Head of caudate nucleus (tissue), 42 donors: ENCODE measurements at regions of chr11 and their contacts with region 1.

Region 1: GRCh38 chr11:95764267-95764898 is 25.2 kb downstream of the FAM76B start:
- DNase-seq: peak in 2 of 42 donors; percentile 5 to 11

Region 2: GRCh38 chr11:94973099-94973968 is 791.0 kb before region 1 on chr11 and contains the starts of genes CWC15 and KDM4D:
- intact Hi-C with region 1: loop called (anchors 10 kb)
- DNase-seq: peak; percentile 91 to 99 (median 96)

Region 3: DNA sequence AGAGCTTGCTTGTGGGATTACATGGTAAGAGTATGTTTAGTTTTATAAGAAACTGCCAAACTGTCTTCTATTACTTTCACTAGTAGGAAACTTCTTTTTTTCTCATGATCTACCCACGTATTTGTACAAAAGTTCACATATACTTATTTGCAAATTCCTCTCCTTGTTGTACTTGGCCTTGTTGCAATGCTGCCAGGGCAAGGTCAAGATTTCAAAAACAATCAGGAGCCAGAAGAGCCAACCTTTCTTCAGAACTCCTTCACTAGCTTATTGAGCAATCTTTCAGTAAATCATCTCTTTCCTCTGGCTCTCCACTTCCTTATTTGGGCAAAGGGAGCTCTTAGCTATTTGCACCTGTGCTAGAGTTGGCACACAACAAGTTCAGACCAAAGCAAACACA is 688.0 kb before region 1 on chr11:
- intact Hi-C with region 1: loop called (anchors 10 kb)
- DNase-seq: no peak

Region 4: DNA sequence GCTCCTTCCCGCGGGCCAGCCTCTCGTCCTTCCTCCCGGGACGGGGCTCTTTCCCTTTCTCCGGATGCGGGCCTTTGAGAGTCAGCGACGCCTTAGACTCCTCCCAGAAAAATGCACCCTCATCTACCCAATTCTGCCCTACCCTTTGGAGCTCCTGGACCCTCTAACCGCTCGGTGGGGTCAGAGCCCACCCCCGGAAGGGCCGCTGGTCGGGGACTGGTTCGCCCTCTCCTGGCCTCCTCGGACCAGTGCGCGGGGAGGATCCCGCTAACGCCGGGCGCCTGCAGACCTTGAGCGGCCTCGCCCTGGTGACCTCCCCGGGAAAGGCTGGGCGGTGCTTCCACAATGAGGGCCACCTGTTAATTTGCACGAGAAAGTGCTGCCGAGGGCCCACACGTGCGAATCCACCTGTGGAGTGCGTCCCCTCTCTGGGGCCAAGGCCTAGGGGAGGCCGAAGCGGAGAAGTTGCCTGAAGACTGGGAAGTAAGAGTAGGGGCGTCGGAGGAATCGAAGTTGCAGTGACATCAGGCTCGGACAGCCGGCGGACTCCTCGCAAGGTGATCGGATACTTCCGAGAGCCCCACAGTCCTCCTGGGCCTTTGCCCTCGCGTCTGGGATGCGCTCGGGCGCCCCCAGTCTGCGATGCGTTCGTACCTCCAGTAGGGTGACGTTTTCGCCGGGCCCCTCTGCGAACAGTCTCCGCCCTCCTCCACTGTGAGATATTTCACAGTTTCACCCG is 613.3 kb before region 1 on chr11:
- intact Hi-C with region 1: loop called (anchors 2 kb)
- DNase-seq: peak; percentile 86 to 98 (median 94)

Region 5: GRCh38 chr11:95584589-95584988 is 179.8 kb before region 1 on chr11:
- intact Hi-C with region 1: no loop called
- DNase-seq: no peak

Region 6: DNA sequence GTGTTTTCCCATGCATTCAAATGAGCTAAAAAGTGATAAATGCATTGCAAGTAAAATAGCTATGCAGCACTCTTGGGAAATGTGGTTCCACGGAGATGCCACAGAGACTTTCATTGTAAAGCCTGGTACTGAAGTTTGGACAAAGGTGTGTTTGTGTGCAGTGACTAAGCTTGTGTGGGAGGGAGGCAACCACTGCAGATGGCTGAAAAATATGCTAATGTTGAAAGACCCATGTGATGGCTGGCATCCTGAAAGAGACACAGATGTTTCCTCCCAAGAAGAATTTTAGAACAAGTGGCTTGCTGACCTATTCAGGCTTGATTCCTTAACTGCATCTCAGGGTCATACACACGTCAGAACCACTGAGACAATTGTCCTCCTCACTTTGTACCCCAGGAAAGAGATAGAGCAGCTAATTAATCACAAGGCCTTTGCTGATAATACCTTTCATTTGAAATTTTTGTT is 48.6 kb before region 1 on chr11:
- intact Hi-C with region 1: loop called (anchors 10 kb)
- DNase-seq: peak in 21 of 42 donors; percentile 9 to 63 (median 41)